CD4-positive, alpha-beta T cell (primary cell): ENCODE measurements at regions of chr17 and their contacts with region 1.

Region 1: GRCh38 chr17:7687908-7688807 is at the start of gene WRAP53:
- DNase-seq: peak; percentile 93 to 98 (median 95)
- ATAC-seq: peak; percentile 75
- H3K4me3 ChIP-seq: peak within 1 kb of the TSS; percentile 72
- H3K4me3 Mint-ChIP-seq: peak within 1 kb of the TSS; percentile 99
- H3K27ac ChIP-seq: peak within 1 kb of the TSS; percentile 96 to 98
- H3K27ac Mint-ChIP-seq: peak within 1 kb of the TSS; percentile 100
- H3K4me1 ChIP-seq: peaks cover 38% of the 10 kb centered on the region
- H3K4me1 Mint-ChIP-seq: peaks cover 46% of the 10 kb centered on the region
- H3K27me3 ChIP-seq: no peaks in the 10 kb centered on the region
- H3K27me3 Mint-ChIP-seq: peaks cover 7% of the 10 kb centered on the region
- CTCF ChIP-seq: peak; percentile 100
- total RNA-seq, gene WRAP53: 3.9 to 4.0 TPM

Region 2: GRCh38 chr17:6862822-6863221 is 825.3 kb before region 1 on chr17:
- CTCF ChIA-PET with region 1: no interaction called
- POLR2A ChIA-PET with region 1: no interaction called
- intact Hi-C with region 1: no loop called
- DNase-seq: peak in 1 of 14 experiments; percentile 31
- ATAC-seq: no peak
- H3K4me3 ChIP-seq: no peak overlapping the region
- H3K4me3 Mint-ChIP-seq: no peak overlapping the region
- H3K27ac ChIP-seq: no peak overlapping the region
- H3K27ac Mint-ChIP-seq: no peak overlapping the region
- H3K4me1 ChIP-seq: peaks cover 3% of the 10 kb centered on the region
- H3K4me1 Mint-ChIP-seq: peaks cover 9% of the 10 kb centered on the region
- H3K27me3 ChIP-seq: peaks cover 0 to 8% of the 10 kb centered on the region in 2 experiments
- H3K27me3 Mint-ChIP-seq: peaks cover 26% of the 10 kb centered on the region
- CTCF ChIP-seq: no peak

Region 3: DNA sequence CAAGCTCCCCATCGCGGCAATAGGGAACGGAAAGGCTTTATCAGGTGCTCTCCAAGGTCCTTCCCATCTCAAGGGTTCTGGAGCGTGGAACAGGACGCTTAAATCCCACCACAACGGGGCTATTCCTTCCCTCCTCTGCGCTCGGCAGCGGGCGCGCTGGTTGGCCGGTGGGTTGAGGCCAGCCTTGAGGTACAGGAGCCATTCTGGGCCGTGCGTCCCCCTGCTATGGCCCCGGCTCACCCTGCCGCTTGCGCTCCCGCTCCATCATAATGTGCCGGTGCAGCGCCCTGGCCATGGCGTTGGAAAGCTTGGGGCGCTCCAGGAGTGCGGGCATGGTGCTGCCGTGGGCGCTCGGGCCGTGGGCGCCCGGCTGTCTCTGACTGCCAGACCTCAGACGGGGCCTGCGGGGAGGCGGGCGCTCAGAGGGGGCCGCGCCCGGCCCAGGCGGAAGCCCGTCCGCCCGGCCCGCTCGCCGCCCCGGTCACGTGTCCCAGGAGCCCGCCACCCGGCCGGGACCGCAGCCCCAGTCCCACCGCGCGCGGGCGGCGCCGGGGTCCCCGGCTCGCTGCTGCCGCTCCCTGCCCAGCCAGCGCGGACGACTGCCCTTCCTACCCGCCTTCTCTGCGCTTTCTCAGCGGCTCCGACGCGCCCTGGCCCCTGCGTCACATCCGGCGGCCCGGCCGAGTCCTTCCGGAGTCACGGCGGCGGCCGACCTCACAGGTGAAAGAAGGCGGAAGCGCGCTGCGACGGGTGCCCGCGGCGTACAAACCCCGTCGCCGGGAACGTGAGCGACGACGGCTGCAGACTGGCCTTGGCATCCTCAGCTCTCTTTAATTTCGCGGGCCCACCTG is 373.2 kb before region 1 on chr17 and contains the start of gene GPS2:
- CTCF ChIA-PET with region 1: no interaction called
- POLR2A ChIA-PET with region 1: interaction called, 5 read pairs
- intact Hi-C with region 1: loop called in 1 of 2 experiments (anchors 5 kb)
- DNase-seq: peak; percentile 88 to 97 (median 94)
- ATAC-seq: peak; percentile 79
- H3K4me3 ChIP-seq: peak within 1 kb of the TSS; percentile 86
- H3K4me3 Mint-ChIP-seq: peak within 1 kb of the TSS; percentile 97
- H3K27ac ChIP-seq: peak within 1 kb of the TSS; percentile 82 to 92
- H3K27ac Mint-ChIP-seq: peak within 1 kb of the TSS; percentile 95
- H3K4me1 ChIP-seq: peaks cover 58% of the 10 kb centered on the region
- H3K4me1 Mint-ChIP-seq: peaks cover 59% of the 10 kb centered on the region
- H3K27me3 ChIP-seq: no peaks in the 10 kb centered on the region
- H3K27me3 Mint-ChIP-seq: no peaks in the 10 kb centered on the region
- CTCF ChIP-seq: no peak
- total RNA-seq, gene GPS2: 122 to 140 TPM

Region 4: DNA sequence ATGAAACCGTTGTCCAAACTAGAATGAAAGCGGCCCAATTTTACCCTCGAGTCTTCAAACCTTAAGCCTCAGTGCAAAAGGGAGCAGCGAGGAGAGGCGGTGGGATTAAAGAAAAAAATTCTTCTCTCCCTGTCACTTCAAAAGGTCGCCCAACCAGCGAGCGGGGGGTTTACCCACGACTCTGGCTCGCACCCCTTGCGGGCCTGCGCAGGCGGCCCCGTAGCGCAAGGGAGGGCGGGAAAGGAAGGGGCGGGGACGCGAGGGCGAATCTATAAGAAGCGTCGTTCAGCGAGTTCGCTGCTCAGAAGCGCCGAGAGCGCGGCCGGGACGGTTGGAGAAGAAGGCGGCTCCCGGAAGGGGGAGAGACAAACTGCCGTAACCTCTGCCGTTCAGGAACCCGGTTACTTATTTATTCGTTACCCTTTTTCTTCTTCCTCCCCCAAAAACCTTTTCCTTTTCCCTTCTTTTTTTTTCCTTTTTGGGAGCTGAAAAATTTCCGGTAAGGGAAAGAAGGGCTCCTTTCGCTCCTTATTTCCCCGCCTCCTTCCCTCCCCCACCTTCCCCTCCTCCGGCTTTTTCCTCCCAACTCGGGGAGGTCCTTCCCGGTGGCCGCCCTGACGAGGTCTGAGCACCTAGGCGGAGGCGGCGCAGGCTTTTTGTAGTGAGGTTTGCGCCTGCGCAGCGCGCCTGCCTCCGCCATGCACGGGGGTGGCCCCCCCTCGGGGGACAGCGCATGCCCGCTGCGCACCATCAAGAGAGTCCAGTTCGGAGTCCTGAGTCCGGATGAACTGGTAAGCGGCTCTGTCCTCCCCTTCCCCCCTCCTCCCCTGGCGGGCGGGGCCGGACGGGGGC is 203.9 kb before region 1 on chr17 and contains the start of gene POLR2A:
- CTCF ChIA-PET with region 1: no interaction called
- POLR2A ChIA-PET with region 1: interaction called, 65 read pairs
- intact Hi-C with region 1: no loop called
- DNase-seq: peak; percentile 96 to 100 (median 98)
- ATAC-seq: peak; percentile 66
- H3K4me3 ChIP-seq: peak within 1 kb of the TSS; percentile 87
- H3K4me3 Mint-ChIP-seq: peak within 1 kb of the TSS; percentile 94
- H3K27ac ChIP-seq: peak within 1 kb of the TSS; percentile 99
- H3K27ac Mint-ChIP-seq: peak within 1 kb of the TSS; percentile 99
- H3K4me1 ChIP-seq: peaks cover 73% of the 10 kb centered on the region
- H3K4me1 Mint-ChIP-seq: peaks cover 72% of the 10 kb centered on the region
- H3K27me3 ChIP-seq: no peaks in the 10 kb centered on the region
- H3K27me3 Mint-ChIP-seq: no peaks in the 10 kb centered on the region
- CTCF ChIP-seq: no peak
- total RNA-seq, gene POLR2A: 491 to 501 TPM

Region 5: GRCh38 chr17:7589204-7589868 is 98.8 kb before region 1 on chr17:
- CTCF ChIA-PET with region 1: interaction called, 21 read pairs
- POLR2A ChIA-PET with region 1: interaction called, 140 read pairs
- intact Hi-C with region 1: loop called in 1 of 2 experiments (anchors 5 kb)
- DNase-seq: peak; percentile 47 to 87 (median 62)
- ATAC-seq: peak; percentile 90
- H3K4me3 ChIP-seq: no peak overlapping the region
- H3K4me3 Mint-ChIP-seq: no peak overlapping the region
- H3K27ac ChIP-seq: no peak overlapping the region
- H3K27ac Mint-ChIP-seq: no peak overlapping the region
- H3K4me1 ChIP-seq: peaks cover 31% of the 10 kb centered on the region
- H3K4me1 Mint-ChIP-seq: peaks cover 7% of the 10 kb centered on the region
- H3K27me3 ChIP-seq: no peaks in the 10 kb centered on the region
- H3K27me3 Mint-ChIP-seq: no peaks in the 10 kb centered on the region
- CTCF ChIP-seq: peak; percentile 76

Region 6: GRCh38 chr17:7667656-7668406 is 20.3 kb before region 1 on chr17:
- CTCF ChIA-PET with region 1: interaction called, 4 read pairs
- POLR2A ChIA-PET with region 1: interaction called, 47 read pairs
- intact Hi-C with region 1: no loop called
- DNase-seq: no peak
- ATAC-seq: no peak
- H3K4me3 ChIP-seq: no peak overlapping the region
- H3K4me3 Mint-ChIP-seq: no peak overlapping the region
- H3K27ac ChIP-seq: no peak overlapping the region
- H3K27ac Mint-ChIP-seq: no peak overlapping the region
- H3K4me1 ChIP-seq: no peaks in the 10 kb centered on the region
- H3K4me1 Mint-ChIP-seq: no peaks in the 10 kb centered on the region
- H3K27me3 ChIP-seq: no peaks in the 10 kb centered on the region
- H3K27me3 Mint-ChIP-seq: no peaks in the 10 kb centered on the region
- CTCF ChIP-seq: no peak

Region 7: DNA sequence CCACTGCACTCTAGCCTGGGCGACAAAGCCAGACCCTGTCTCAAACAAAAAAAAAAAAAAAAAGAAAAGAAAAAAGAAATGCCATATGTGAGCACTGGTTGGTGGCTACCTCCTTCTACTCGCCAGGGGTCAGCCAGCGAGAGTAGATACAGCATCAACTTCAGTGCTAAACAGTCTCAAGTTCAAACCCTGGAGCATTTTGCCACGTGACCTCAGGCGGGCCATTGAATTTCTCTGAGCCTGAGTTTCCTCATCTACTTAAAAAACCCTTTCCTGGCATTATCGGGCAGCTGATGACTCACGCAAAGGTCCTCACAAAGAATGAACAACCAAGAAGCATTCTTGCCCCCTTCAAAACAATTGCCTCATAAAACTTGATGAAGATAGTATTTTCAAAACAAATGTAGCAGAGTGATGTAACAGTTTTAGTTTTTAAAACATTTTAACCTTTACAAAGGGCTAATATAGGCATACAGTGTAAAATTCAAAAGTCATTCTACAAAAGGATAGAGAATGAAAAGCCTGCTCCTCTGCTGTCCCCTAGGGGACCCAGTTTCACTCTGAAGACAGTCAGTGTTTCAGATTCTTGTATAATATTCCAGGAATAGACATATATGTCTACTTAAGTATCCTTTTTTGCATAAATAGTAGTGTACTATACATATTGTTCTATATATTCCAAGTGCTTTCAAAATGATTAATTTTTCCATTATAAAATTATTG is 57.8 kb after region 1 on chr17:
- CTCF ChIA-PET with region 1: no interaction called
- POLR2A ChIA-PET with region 1: no interaction called
- intact Hi-C with region 1: no loop called
- DNase-seq: peak in 1 of 14 experiments; percentile 17
- ATAC-seq: no peak
- H3K4me3 ChIP-seq: no peak overlapping the region
- H3K4me3 Mint-ChIP-seq: no peak overlapping the region
- H3K27ac ChIP-seq: no peak overlapping the region
- H3K27ac Mint-ChIP-seq: no peak overlapping the region
- H3K4me1 ChIP-seq: no peaks in the 10 kb centered on the region
- H3K4me1 Mint-ChIP-seq: no peaks in the 10 kb centered on the region
- H3K27me3 ChIP-seq: peaks cover 2 to 4% of the 10 kb centered on the region in 2 experiments
- H3K27me3 Mint-ChIP-seq: peaks cover 17% of the 10 kb centered on the region
- CTCF ChIP-seq: no peak

Region 8: DNA sequence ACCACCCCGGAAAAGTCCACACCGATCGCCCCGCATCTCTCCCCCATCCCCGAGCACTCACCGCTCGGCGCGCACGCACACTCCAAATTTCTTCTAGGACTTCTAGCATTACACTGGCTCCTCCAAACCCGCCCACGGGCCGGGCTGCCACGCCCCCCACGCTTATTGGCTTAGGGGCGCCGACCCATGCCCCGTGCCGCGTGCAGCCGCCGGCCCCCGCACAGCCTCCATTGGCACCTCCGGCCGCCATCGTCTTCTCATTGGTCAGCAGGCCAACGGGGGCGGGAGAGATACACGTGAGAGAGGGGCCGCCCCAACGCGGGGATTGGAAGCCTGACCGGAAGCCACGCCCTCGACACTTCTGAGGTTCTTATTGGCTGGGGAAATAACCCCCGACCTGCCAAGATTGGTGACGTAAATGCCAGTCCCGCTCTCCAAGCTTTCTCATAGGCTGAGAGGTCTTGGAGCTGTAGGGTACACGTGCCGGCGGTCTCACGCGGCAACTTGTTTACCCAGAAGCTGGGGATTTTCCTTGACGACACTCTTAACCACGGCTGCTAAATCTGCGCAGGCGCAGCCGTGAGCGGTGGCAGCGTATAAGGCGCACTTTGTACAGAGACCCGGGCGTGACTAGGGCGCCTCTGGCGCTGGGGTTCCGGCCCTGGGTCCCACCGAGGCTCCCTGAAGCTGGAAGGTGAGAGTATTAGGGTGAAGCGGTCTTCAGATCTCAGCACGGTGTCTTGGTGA is 468.3 kb after region 1 on chr17:
- CTCF ChIA-PET with region 1: interaction called, 3 read pairs
- POLR2A ChIA-PET with region 1: interaction called, 17 read pairs
- intact Hi-C with region 1: no loop called
- DNase-seq: peak; percentile 99 to 100 (median 100)
- ATAC-seq: peak; percentile 70
- H3K4me3 ChIP-seq: peak overlapping the region; percentile 86
- H3K4me3 Mint-ChIP-seq: no peak overlapping the region
- H3K27ac ChIP-seq: peak overlapping the region; percentile 99 to 100
- H3K27ac Mint-ChIP-seq: no peak overlapping the region
- H3K4me1 ChIP-seq: peaks cover 88% of the 10 kb centered on the region
- H3K4me1 Mint-ChIP-seq: peaks cover 73% of the 10 kb centered on the region
- H3K27me3 ChIP-seq: no peaks in the 10 kb centered on the region
- H3K27me3 Mint-ChIP-seq: peaks cover 3% of the 10 kb centered on the region
- CTCF ChIP-seq: no peak

Region 9: GRCh38 chr17:8275421-8276290 is 587.5 kb after region 1 on chr17:
- CTCF ChIA-PET with region 1: no interaction called
- POLR2A ChIA-PET with region 1: no interaction called
- intact Hi-C with region 1: no loop called
- DNase-seq: no peak
- ATAC-seq: no peak
- H3K4me3 ChIP-seq: no peak overlapping the region
- H3K4me3 Mint-ChIP-seq: no peak overlapping the region
- H3K27ac ChIP-seq: no peak overlapping the region
- H3K27ac Mint-ChIP-seq: no peak overlapping the region
- H3K4me1 ChIP-seq: no peaks in the 10 kb centered on the region
- H3K4me1 Mint-ChIP-seq: no peaks in the 10 kb centered on the region
- H3K27me3 ChIP-seq: no peaks in the 10 kb centered on the region
- H3K27me3 Mint-ChIP-seq: no peaks in the 10 kb centered on the region
- CTCF ChIP-seq: no peak